CD8-positive, alpha-beta memory T cell (primary cell): ENCODE measurements at regions of chr14 and their contacts with region 1.

Region 1: GRCh38 chr14:50085570-50086320 is 30.6 kb downstream of the VCPKMT start:
- DNase-seq: peak; percentile 21 to 54 (median 44)
- H3K4me3 ChIP-seq: peak overlapping the region; percentile 7
- H3K4me3 Mint-ChIP-seq: peak overlapping the region; percentile 6 to 89 (median 71)
- H3K27ac ChIP-seq: peak overlapping the region; percentile 35
- H3K27ac Mint-ChIP-seq: peak overlapping the region; percentile 89 to 99 (median 97)
- H3K4me1 ChIP-seq: peaks cover 93% of the 10 kb centered on the region
- H3K4me1 Mint-ChIP-seq: peaks cover 75 to 93% (median 86%) of the 10 kb centered on the region in 3 donors
- H3K27me3 ChIP-seq: no peaks in the 10 kb centered on the region
- H3K27me3 Mint-ChIP-seq: no peaks in the 10 kb centered on the region

Region 2: GRCh38 chr14:49879683-49880204 is 206.0 kb before region 1 on chr14:
- CTCF ChIA-PET with region 1: interaction called, 12 read pairs
- POLR2A ChIA-PET with region 1: no interaction called
- DNase-seq: peak in 4 of 5 donors; percentile 34 to 72 (median 56)
- H3K4me3 ChIP-seq: no peak overlapping the region
- H3K4me3 Mint-ChIP-seq: no peak overlapping the region
- H3K27ac ChIP-seq: no peak overlapping the region
- H3K27ac Mint-ChIP-seq: peak overlapping the region in 6 of 8 donors; percentile 36 to 96 (median 62)
- H3K4me1 ChIP-seq: peaks cover 11% of the 10 kb centered on the region
- H3K4me1 Mint-ChIP-seq: peaks cover 3 to 12% (median 10%) of the 10 kb centered on the region in 3 donors
- H3K27me3 ChIP-seq: no peaks in the 10 kb centered on the region
- H3K27me3 Mint-ChIP-seq: no peaks in the 10 kb centered on the region

Region 3: GRCh38 chr14:49892636-49893308 is 193.0 kb before region 1 on chr14 and contains the start of gene ARF6:
- CTCF ChIA-PET with region 1: interaction called, 3 read pairs
- POLR2A ChIA-PET with region 1: interaction called, 23 read pairs
- DNase-seq: peak; percentile 92 to 96 (median 94)
- H3K4me3 ChIP-seq: peak within 1 kb of the TSS; percentile 85
- H3K4me3 Mint-ChIP-seq: peak within 1 kb of the TSS; percentile 92 to 100 (median 99)
- H3K27ac ChIP-seq: peak within 1 kb of the TSS; percentile 97
- H3K27ac Mint-ChIP-seq: peak within 1 kb of the TSS; percentile 97 to 100 (median 99)
- H3K4me1 ChIP-seq: peaks cover 31% of the 10 kb centered on the region
- H3K4me1 Mint-ChIP-seq: peaks cover 30 to 44% (median 32%) of the 10 kb centered on the region in 3 donors
- H3K27me3 ChIP-seq: no peaks in the 10 kb centered on the region
- H3K27me3 Mint-ChIP-seq: peaks cover 0 to 1% of the 10 kb centered on the region in 2 donors
- total RNA-seq, gene ARF6: 168 TPM

Region 4: DNA sequence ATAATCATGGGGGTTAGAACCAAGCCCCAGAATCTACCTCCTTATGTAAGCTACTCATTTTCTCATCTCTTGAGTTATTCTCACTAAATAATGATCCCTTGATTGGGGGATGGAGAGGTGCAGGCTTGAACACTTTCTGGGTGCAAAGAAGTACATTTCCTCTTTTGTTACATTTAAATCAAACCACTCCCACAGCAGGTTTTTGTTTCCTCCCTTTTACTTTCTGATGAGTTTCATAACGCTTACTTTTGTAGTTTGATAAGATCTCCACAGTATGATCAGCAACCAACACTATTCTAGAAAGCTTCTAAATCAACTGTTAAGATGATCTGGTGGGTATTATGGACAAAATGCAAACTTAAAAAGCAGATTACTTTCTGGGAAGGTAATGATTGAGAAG is 10.2 kb after region 1 on chr14:
- CTCF ChIA-PET with region 1: interaction called, 17 read pairs
- POLR2A ChIA-PET with region 1: interaction called, 5 read pairs
- DNase-seq: peak in 2 of 5 donors; percentile 43 to 57
- H3K4me3 ChIP-seq: peak overlapping the region; percentile 39
- H3K4me3 Mint-ChIP-seq: peak overlapping the region; percentile 2 to 66 (median 62)
- H3K27ac ChIP-seq: no peak overlapping the region
- H3K27ac Mint-ChIP-seq: peak overlapping the region; percentile 20 to 96 (median 88)
- H3K4me1 ChIP-seq: peaks cover 70% of the 10 kb centered on the region
- H3K4me1 Mint-ChIP-seq: peaks cover 52 to 67% (median 65%) of the 10 kb centered on the region in 3 donors
- H3K27me3 ChIP-seq: no peaks in the 10 kb centered on the region
- H3K27me3 Mint-ChIP-seq: peaks cover 0 to 1% of the 10 kb centered on the region in 2 donors

Region 5: GRCh38 chr14:50101417-50101816 is 15.7 kb after region 1 on chr14:
- CTCF ChIA-PET with region 1: interaction called, 17 read pairs
- POLR2A ChIA-PET with region 1: interaction called, 8 read pairs
- DNase-seq: no peak
- H3K4me3 ChIP-seq: no peak overlapping the region
- H3K4me3 Mint-ChIP-seq: no peak overlapping the region
- H3K27ac ChIP-seq: no peak overlapping the region
- H3K27ac Mint-ChIP-seq: peak overlapping the region in 2 of 8 donors; percentile 74 to 87
- H3K4me1 ChIP-seq: peaks cover 55% of the 10 kb centered on the region
- H3K4me1 Mint-ChIP-seq: peaks cover 37 to 62% (median 53%) of the 10 kb centered on the region in 3 donors
- H3K27me3 ChIP-seq: no peaks in the 10 kb centered on the region
- H3K27me3 Mint-ChIP-seq: no peaks in the 10 kb centered on the region

Region 6: GRCh38 chr14:50139192-50139591 is 53.4 kb after region 1 on chr14:
- CTCF ChIA-PET with region 1: no interaction called
- POLR2A ChIA-PET with region 1: no interaction called
- DNase-seq: no peak
- H3K4me3 ChIP-seq: no peak overlapping the region
- H3K4me3 Mint-ChIP-seq: no peak overlapping the region
- H3K27ac ChIP-seq: no peak overlapping the region
- H3K27ac Mint-ChIP-seq: no peak overlapping the region
- H3K4me1 ChIP-seq: no peaks in the 10 kb centered on the region
- H3K4me1 Mint-ChIP-seq: no peaks in the 10 kb centered on the region
- H3K27me3 ChIP-seq: no peaks in the 10 kb centered on the region
- H3K27me3 Mint-ChIP-seq: no peaks in the 10 kb centered on the region

Region 7: GRCh38 chr14:50311975-50312733 is 226.4 kb after region 1 on chr14 and contains the starts of genes DMAC2L and L2HGDH:
- CTCF ChIA-PET with region 1: no interaction called
- POLR2A ChIA-PET with region 1: no interaction called
- DNase-seq: peak; percentile 84 to 92 (median 89)
- H3K4me3 ChIP-seq: peak within 1 kb of the TSS; percentile 84
- H3K4me3 Mint-ChIP-seq: peak within 1 kb of the TSS; percentile 88 to 98 (median 93)
- H3K27ac ChIP-seq: peak within 1 kb of the TSS; percentile 52
- H3K27ac Mint-ChIP-seq: peak within 1 kb of the TSS; percentile 95 to 99 (median 98)
- H3K4me1 ChIP-seq: peaks cover 20% of the 10 kb centered on the region
- H3K4me1 Mint-ChIP-seq: peaks cover 38 to 47% (median 43%) of the 10 kb centered on the region in 3 donors
- H3K27me3 ChIP-seq: no peaks in the 10 kb centered on the region
- H3K27me3 Mint-ChIP-seq: peaks cover 0 to 2% of the 10 kb centered on the region in 2 donors
- total RNA-seq, gene DMAC2L: 14.3 to 14.7 TPM
- total RNA-seq, gene L2HGDH: 19.7 to 20.0 TPM